ENCODE measurements at regions of chr6 and their contacts with region 1.

Region 1: DNA sequence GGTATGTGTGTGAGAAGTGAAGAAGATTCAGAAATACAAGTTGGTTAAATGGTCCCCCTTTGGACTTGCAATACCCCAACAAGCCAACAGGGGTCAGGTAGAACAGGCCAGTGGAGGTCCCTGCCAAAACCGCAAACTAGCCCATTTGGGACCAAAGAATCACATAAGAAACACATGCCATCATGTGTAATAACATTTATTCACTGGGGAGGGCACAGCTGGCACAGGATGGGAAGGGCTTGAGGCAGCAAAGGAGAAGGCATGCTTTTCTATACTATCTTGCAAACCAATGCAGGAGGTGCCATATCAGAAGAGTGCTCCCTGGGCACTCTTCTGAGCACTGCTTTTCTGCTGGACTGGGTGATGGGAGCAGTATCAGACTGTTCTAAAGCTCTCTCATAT is 116.1 kb upstream of the TRAF3IP2 start:
- DNase-seq: peak; percentile 54
- ATAC-seq: no peak
- H3K4me3 ChIP-seq: no peak overlapping the region
- H3K4me3 Mint-ChIP-seq: no peak overlapping the region
- H3K27ac ChIP-seq: no peak overlapping the region
- H3K27ac Mint-ChIP-seq: no peak overlapping the region
- H3K4me1 ChIP-seq: peaks cover 37 to 40% of the 10 kb centered on the region in 2 donors
- H3K4me1 Mint-ChIP-seq: peaks cover 41% of the 10 kb centered on the region
- H3K27me3 ChIP-seq: no peaks in the 10 kb centered on the region
- H3K27me3 Mint-ChIP-seq: no peaks in the 10 kb centered on the region
- CTCF ChIP-seq: peak; percentile 70

Region 2: DNA sequence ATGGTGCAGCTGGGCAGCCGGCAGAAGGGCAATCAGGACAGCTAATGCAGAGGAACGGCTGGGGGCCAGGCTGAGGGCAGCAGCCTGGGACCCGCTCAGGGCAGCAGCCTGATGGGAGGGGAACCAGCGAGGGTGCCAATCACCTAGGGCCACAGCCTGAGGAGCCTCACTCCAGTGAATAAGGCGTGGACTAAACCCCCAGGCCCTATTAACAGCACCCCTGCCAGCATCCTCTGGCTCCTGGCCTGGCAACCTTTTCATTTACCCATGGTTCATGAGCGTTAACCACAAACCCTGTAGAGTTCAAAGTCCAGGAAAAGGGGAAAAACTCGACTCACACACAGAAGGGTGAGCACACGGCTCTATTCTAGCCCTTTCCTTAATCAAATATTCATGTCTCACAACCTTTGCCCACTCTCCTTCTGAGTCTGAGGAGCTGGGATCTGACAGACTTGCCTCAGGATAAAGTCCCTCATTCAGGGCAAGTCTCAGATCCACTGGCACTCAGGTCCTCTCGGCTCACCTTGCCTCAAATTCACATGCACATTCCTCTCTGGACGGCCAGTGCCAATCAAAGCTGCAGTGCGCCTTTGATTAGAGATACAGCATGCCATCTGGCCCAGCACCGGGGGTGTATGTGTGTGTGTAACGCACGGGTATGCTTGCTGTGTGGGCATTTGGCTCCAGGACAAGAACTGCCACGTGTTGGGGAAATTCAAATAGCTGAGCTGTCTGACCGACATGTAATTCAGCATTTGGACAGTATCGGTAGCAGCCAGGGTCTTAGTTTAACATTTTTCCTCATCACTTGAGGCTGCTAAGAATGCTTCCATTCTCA is 29.2 kb before region 1 on chr6:
- CTCF ChIA-PET with region 1: no interaction called
- POLR2A ChIA-PET with region 1: no interaction called
- intact Hi-C with region 1: no loop called
- DNase-seq: no peak
- ATAC-seq: no peak
- H3K4me3 ChIP-seq: no peak overlapping the region
- H3K4me3 Mint-ChIP-seq: no peak overlapping the region
- H3K27ac ChIP-seq: no peak overlapping the region
- H3K27ac Mint-ChIP-seq: no peak overlapping the region
- H3K4me1 ChIP-seq: no peaks in the 10 kb centered on the region
- H3K4me1 Mint-ChIP-seq: no peaks in the 10 kb centered on the region
- H3K27me3 ChIP-seq: no peaks in the 10 kb centered on the region
- H3K27me3 Mint-ChIP-seq: no peaks in the 10 kb centered on the region
- CTCF ChIP-seq: no peak

Region 3: GRCh38 chr6:111709615-111710398 is 11.9 kb before region 1 on chr6:
- CTCF ChIA-PET with region 1: interaction called, 30 read pairs
- POLR2A ChIA-PET with region 1: interaction called, 6 read pairs
- intact Hi-C with region 1: loop called (anchors 1 kb)
- DNase-seq: peak; percentile 77
- ATAC-seq: peak; percentile 96
- H3K4me3 ChIP-seq: no peak overlapping the region
- H3K4me3 Mint-ChIP-seq: peak overlapping the region; percentile 6
- H3K27ac ChIP-seq: no peak overlapping the region
- H3K27ac Mint-ChIP-seq: peak overlapping the region; percentile 32
- H3K4me1 ChIP-seq: peaks cover 3 to 5% of the 10 kb centered on the region in 2 donors
- H3K4me1 Mint-ChIP-seq: no peaks in the 10 kb centered on the region
- H3K27me3 ChIP-seq: no peaks in the 10 kb centered on the region
- H3K27me3 Mint-ChIP-seq: no peaks in the 10 kb centered on the region
- CTCF ChIP-seq: peak; percentile 87

Region 4: DNA sequence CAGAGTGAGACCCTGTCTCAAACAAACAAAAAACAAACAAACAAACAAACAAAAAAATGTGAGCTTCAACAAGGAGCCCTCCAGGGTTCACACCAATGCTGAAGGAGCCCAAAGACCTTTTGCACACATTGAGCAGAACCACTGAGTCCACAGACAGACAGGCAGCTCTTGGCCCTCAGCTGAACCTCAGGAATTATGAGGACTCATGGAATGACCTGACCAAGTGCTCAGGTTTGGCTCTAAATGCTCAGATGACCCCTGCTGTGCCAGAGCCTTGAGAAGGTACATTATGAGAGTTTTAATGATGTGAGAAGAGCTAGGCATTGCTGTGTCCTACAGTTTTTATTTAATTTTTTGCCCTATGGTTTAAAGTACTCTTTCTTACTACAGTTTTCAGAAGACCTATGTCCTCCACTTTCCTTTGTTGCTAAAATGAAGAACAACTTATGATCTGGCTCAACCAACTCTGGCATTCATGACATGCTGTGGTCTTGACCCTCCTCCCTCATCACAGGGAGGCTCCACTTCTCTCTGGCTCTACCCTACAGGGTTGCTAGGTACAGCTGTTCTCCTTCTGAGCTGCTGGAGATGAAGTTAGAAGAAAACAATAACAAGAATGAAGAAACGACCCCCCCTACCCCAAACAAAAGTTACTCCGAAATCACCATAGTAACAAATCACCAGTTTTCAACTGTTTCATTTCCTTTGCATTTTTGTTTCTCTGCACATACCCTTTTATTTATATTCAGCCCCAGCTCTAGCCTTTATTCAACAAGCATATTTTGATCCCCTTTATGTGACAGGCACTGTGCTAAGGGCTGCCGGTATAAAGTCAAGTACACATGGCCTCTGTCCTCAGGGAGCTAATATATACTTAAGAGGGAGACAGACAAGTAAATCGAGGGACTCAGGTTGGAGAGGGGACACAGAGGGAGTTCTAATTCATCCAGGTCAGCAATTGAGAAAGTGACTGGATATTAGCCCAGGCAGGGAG is 12.6 kb after region 1 on chr6:
- CTCF ChIA-PET with region 1: no interaction called
- POLR2A ChIA-PET with region 1: no interaction called
- intact Hi-C with region 1: no loop called
- DNase-seq: peak; percentile 29
- ATAC-seq: peak; percentile 28
- H3K4me3 ChIP-seq: no peak overlapping the region
- H3K4me3 Mint-ChIP-seq: no peak overlapping the region
- H3K27ac ChIP-seq: no peak overlapping the region
- H3K27ac Mint-ChIP-seq: peak overlapping the region; percentile 27
- H3K4me1 ChIP-seq: peaks cover 60 to 81% of the 10 kb centered on the region in 2 donors
- H3K4me1 Mint-ChIP-seq: peaks cover 70% of the 10 kb centered on the region
- H3K27me3 ChIP-seq: no peaks in the 10 kb centered on the region
- H3K27me3 Mint-ChIP-seq: no peaks in the 10 kb centered on the region
- CTCF ChIP-seq: no peak

Region 5: DNA sequence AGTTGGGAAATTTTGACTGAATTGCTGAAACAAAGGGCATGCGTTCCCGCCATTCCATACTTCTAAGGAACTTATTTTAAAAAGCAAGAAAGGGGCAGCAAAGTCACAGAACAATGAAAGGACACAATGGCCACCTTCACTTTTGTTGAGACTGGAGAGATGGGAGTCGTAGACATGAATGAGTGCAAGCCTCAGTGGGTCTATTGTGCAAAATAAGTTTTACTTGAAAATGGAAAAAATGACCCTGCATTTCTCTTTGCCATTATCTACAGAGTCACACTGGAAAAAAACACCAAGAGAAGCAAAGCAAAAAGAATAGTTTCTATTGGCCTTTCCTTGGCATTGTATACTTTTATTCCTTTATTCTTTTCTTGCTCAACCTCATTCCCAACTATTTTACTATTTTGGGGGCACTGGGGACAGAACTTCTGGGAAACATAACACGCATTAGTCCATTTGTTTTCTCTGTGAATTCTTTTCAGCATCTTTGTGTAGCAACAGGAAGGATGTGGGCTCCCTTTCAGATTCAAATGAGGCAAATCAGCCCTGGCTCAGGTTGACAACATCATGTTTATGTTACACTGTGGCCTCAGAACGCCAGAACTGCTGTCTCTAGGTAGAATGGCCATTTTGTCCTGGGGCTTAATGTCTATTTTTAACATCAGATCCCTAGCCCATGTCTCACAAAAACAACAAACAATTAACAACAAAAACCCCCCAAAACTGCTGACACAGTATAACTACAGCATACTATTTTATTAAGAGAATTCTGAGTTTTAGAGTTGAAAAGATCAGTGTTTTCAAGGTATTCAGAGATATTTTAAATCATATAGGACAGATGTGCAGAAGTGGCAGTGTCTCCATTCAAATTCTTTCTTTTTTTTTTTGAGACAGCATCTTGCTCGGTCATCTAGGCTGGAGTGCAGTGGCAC is 29.3 kb after region 1 on chr6:
- CTCF ChIA-PET with region 1: interaction called, 4 read pairs
- POLR2A ChIA-PET with region 1: no interaction called
- intact Hi-C with region 1: loop called (anchors 1 kb)
- DNase-seq: peak; percentile 54
- ATAC-seq: peak; percentile 62
- H3K4me3 ChIP-seq: peak overlapping the region in 1 of 5 experiments; percentile 40
- H3K4me3 Mint-ChIP-seq: peak overlapping the region; percentile 69
- H3K27ac ChIP-seq: peak overlapping the region; percentile 35 to 68
- H3K27ac Mint-ChIP-seq: peak overlapping the region; percentile 94
- H3K4me1 ChIP-seq: peaks cover 68 to 75% of the 10 kb centered on the region in 2 donors
- H3K4me1 Mint-ChIP-seq: peaks cover 76% of the 10 kb centered on the region
- H3K27me3 ChIP-seq: no peaks in the 10 kb centered on the region
- H3K27me3 Mint-ChIP-seq: no peaks in the 10 kb centered on the region
- CTCF ChIP-seq: no peak

Region 6: DNA sequence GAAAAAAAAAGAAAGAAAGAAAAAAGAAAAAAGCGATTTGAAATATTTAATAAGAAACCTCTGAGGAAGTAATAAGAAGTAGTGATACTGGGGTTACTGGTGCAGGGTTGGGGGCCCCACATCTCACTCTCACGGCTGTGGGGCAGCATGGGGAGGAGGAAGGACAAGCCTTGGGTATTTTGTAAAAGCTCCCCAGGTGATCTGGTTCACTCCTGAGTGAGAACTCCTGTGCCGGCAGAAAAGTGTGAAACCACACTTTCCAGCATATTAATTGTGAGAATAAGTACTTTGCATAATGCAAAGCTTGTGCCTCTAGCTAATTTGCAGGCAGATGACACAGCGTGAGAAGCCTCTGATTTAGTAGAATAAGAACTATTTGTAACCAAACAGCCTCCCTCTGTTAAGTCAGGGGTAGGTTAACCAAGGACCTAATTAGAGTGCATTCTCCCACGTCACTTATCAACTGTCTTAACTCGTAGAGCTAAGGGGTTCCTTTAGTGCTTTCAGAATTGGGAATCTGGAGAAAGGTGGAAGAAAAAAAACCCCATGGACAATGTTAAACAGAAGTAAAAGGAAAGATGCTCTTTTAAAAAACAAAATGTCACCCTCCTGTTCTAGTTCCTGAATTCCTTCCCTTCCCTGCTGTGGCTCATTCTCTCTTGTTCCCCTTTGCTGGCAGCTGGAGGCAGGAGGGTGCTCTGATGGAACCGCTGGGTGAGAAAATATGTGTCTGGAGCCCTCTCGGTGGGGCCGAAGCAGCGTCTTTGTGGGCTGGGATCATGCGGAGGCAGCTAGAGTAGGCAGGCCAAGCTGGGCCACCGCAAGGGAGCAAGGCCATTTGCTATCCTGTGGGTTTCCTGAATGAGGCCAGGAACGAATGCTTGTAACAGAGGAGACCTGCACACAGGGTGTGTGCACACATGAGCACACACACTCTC is 42.8 kb after region 1 on chr6:
- CTCF ChIA-PET with region 1: interaction called, 6 read pairs
- POLR2A ChIA-PET with region 1: interaction called, 3 read pairs
- intact Hi-C with region 1: loop called (anchors 5 kb)
- DNase-seq: peak; percentile 61
- ATAC-seq: peak; percentile 66
- H3K4me3 ChIP-seq: peak overlapping the region in 1 of 5 experiments; percentile 33
- H3K4me3 Mint-ChIP-seq: peak overlapping the region; percentile 71
- H3K27ac ChIP-seq: peak overlapping the region in 1 of 2 donors; percentile 54
- H3K27ac Mint-ChIP-seq: peak overlapping the region; percentile 77
- H3K4me1 ChIP-seq: peaks cover 63 to 66% of the 10 kb centered on the region in 2 donors
- H3K4me1 Mint-ChIP-seq: peaks cover 84% of the 10 kb centered on the region
- H3K27me3 ChIP-seq: no peaks in the 10 kb centered on the region
- H3K27me3 Mint-ChIP-seq: no peaks in the 10 kb centered on the region
- CTCF ChIP-seq: no peak

Region 7: GRCh38 chr6:111789598-111789997 is 67.8 kb after region 1 on chr6:
- CTCF ChIA-PET with region 1: no interaction called
- POLR2A ChIA-PET with region 1: no interaction called
- intact Hi-C with region 1: no loop called
- DNase-seq: no peak
- ATAC-seq: no peak
- H3K4me3 ChIP-seq: no peak overlapping the region
- H3K4me3 Mint-ChIP-seq: no peak overlapping the region
- H3K27ac ChIP-seq: no peak overlapping the region
- H3K27ac Mint-ChIP-seq: no peak overlapping the region
- H3K4me1 ChIP-seq: peaks cover 0 to 6% of the 10 kb centered on the region in 2 donors
- H3K4me1 Mint-ChIP-seq: peaks cover 7% of the 10 kb centered on the region
- H3K27me3 ChIP-seq: no peaks in the 10 kb centered on the region
- H3K27me3 Mint-ChIP-seq: no peaks in the 10 kb centered on the region
- CTCF ChIP-seq: no peak

Region 8: GRCh38 chr6:111841822-111842221 is 120.1 kb after region 1 on chr6:
- CTCF ChIA-PET with region 1: interaction called, 5 read pairs
- POLR2A ChIA-PET with region 1: no interaction called
- intact Hi-C with region 1: loop called (anchors 10 kb)
- DNase-seq: peak; percentile 53
- ATAC-seq: no peak
- H3K4me3 ChIP-seq: no peak overlapping the region
- H3K4me3 Mint-ChIP-seq: no peak overlapping the region
- H3K27ac ChIP-seq: peak overlapping the region; percentile 66 to 76
- H3K27ac Mint-ChIP-seq: no peak overlapping the region
- H3K4me1 ChIP-seq: peaks cover 67 to 78% of the 10 kb centered on the region in 2 donors
- H3K4me1 Mint-ChIP-seq: peaks cover 50% of the 10 kb centered on the region
- H3K27me3 ChIP-seq: no peaks in the 10 kb centered on the region
- H3K27me3 Mint-ChIP-seq: no peaks in the 10 kb centered on the region
- CTCF ChIP-seq: no peak

Region 9: GRCh38 chr6:111997078-111997852 is 275.5 kb after region 1 on chr6:
- CTCF ChIA-PET with region 1: interaction called, 5 read pairs
- POLR2A ChIA-PET with region 1: no interaction called
- intact Hi-C with region 1: loop called (anchors 1 kb)
- DNase-seq: peak; percentile 79
- ATAC-seq: peak; percentile 93
- H3K4me3 ChIP-seq: no peak overlapping the region
- H3K4me3 Mint-ChIP-seq: peak overlapping the region; percentile 30
- H3K27ac ChIP-seq: no peak overlapping the region
- H3K27ac Mint-ChIP-seq: no peak overlapping the region
- H3K4me1 ChIP-seq: peaks cover 4 to 6% of the 10 kb centered on the region in 2 donors
- H3K4me1 Mint-ChIP-seq: peaks cover 9% of the 10 kb centered on the region
- H3K27me3 ChIP-seq: peaks cover 0 to 11% (median 3%) of the 10 kb centered on the region in 4 experiments
- H3K27me3 Mint-ChIP-seq: peaks cover 21% of the 10 kb centered on the region
- CTCF ChIP-seq: peak; percentile 94